SK-N-SH (cell line): ENCODE measurements at regions of chr4 and their contacts with region 1.

Region 1: GRCh38 chr4:139734875-139735380 is 69.3 kb downstream of the MGST2 start:
- DNase-seq: peak; percentile 97
- H3K4me3 ChIP-seq: peak overlapping the region; percentile 39 to 58; a peak in 3 of 4 replicates
- H3K27ac ChIP-seq: peak overlapping the region; percentile 43 to 99
- H3K4me1 ChIP-seq: peaks cover 6 to 46% of the 10 kb centered on the region in 2 experiments; a peak in 3 of 4 replicates
- H3K27me3 ChIP-seq: no peaks in the 10 kb centered on the region
- CTCF ChIP-seq: peak; percentile 77
- EP300 ChIP-seq: peak in 1 of 2 experiments; percentile 97; a peak in 2 of 4 replicates
- RAD21 ChIP-seq: peak; percentile 82

Region 2: GRCh38 chr4:139761461-139761860 is 26.5 kb after region 1 on chr4:
- CTCF ChIA-PET with region 1: interaction called, 12 read pairs
- POLR2A ChIA-PET with region 1: interaction called, 5 read pairs
- DNase-seq: peak; percentile 32
- H3K4me3 ChIP-seq: no peak overlapping the region
- H3K27ac ChIP-seq: peak overlapping the region in 1 of 2 experiments; percentile 94; a peak in 2 of 4 replicates
- H3K4me1 ChIP-seq: peaks cover 18 to 63% of the 10 kb centered on the region in 2 experiments; a peak in 3 of 4 replicates
- H3K27me3 ChIP-seq: no peaks in the 10 kb centered on the region
- CTCF ChIP-seq: peak; percentile 45
- EP300 ChIP-seq: no peak
- RAD21 ChIP-seq: peak; percentile 45

Region 3: GRCh38 chr4:139783741-139784484 is 49.0 kb after region 1 on chr4:
- CTCF ChIA-PET with region 1: interaction called, 10 read pairs
- POLR2A ChIA-PET with region 1: no interaction called
- DNase-seq: peak; percentile 56
- H3K4me3 ChIP-seq: no peak overlapping the region
- H3K27ac ChIP-seq: peak overlapping the region in 1 of 2 experiments; percentile 99; a peak in 2 of 4 replicates
- H3K4me1 ChIP-seq: peaks cover 0 to 67% of the 10 kb centered on the region in 2 experiments; a peak in 2 of 4 replicates
- H3K27me3 ChIP-seq: no peaks in the 10 kb centered on the region
- CTCF ChIP-seq: no peak
- EP300 ChIP-seq: peak in 1 of 2 experiments; percentile 85; a peak in 2 of 4 replicates
- RAD21 ChIP-seq: peak; percentile 32

Region 4: GRCh38 chr4:139794158-139794954 is 59.4 kb after region 1 on chr4:
- CTCF ChIA-PET with region 1: interaction called, 13 read pairs
- POLR2A ChIA-PET with region 1: no interaction called
- DNase-seq: peak; percentile 45
- H3K4me3 ChIP-seq: no peak overlapping the region
- H3K27ac ChIP-seq: peak overlapping the region; percentile 51 to 99
- H3K4me1 ChIP-seq: peaks cover 18 to 45% of the 10 kb centered on the region in 2 experiments; a peak in 3 of 4 replicates
- H3K27me3 ChIP-seq: no peaks in the 10 kb centered on the region
- CTCF ChIP-seq: no peak
- EP300 ChIP-seq: peak; percentile 18 to 49; a peak in 2 of 4 replicates
- RAD21 ChIP-seq: peak; percentile 16; the same call in 1 of the 2 replicates

Region 5: DNA sequence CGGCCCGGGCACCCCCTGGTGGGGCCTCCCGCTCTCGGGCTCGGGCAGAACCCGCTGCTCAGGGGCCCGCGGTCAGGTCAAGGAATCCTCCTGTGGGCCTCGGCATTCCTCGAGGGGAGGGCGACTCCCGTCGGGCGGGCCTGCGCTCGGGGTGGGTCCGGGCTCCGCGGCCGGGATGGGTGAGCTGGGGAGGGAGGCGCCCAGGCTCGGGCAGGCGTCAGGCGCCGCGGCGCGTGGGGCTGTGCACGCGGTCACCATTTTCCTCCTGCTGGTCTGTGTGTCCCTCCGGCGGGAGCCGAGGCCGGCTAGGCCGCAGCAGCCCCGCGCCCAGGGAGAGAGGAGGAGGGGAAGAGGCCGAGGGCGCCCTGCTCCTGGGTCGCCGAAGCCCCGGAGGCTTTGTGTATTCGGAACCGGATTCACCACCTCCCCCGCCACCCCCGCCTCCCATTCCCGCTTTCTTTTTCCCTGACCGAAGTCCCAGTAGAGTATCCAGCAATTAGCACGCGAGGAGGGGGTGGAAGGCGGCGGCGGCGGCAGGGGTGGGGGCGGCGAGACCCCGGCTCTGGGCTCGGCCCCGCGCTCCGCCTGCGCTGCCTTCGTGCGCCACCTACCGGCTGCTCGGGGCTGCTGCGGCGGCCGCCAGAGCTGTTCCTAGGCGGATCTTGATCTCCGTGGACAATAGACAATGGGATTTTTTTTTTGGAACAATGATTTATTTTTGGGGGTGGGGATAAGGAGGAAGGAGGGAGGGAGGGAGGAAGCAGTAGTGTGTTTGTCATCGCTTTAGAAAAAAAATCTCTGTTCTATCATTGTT is 518.0 kb after region 1 on chr4:
- CTCF ChIA-PET with region 1: interaction called, 10 read pairs
- POLR2A ChIA-PET with region 1: no interaction called
- DNase-seq: peak; percentile 94
- H3K4me3 ChIP-seq: peak overlapping the region; percentile 47 to 55
- H3K27ac ChIP-seq: peak overlapping the region; percentile 78 to 92
- H3K4me1 ChIP-seq: peaks cover 49 to 57% of the 10 kb centered on the region in 2 experiments
- H3K27me3 ChIP-seq: no peaks in the 10 kb centered on the region
- CTCF ChIP-seq: peak; percentile 87
- EP300 ChIP-seq: peak in 1 of 2 experiments; percentile 40; a peak in 1 of 4 replicates
- RAD21 ChIP-seq: peak; percentile 85